Naive thymus-derived CD4-positive, alpha-beta T cell (primary cell): ENCODE measurements at regions of chr3 and their contacts with region 1.

Region 1: DNA sequence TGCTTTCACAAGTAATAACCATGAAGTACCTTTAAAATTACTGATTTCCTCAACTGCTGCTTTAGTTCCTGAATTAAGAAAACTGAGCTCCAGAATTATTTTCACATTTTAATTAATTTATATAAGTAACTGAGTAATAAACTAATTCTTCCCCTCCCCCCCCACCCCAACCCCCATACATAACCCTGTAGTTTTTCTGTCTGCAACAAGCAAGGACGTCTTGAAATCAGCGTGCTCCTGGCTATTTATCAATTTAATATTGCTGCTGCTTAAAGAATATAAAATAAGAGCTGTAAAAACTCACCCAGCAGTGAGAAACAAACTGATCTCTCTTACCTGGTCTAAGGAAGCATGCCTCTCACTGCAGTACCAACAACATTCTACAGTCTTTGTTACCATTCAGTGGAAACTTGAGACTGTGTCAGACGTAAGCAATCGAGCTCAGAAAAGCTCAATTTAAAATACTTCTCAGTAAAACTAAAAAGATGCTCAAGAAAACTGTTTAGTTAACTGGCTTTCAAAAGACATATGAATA is 121.0 kb downstream of the TFDP2 start:
- DNase-seq: peak in 7 of 9 donors; percentile 45 to 72 (median 63)
- ATAC-seq: peak; percentile 90
- H3K4me3 ChIP-seq: peak overlapping the region; percentile 47
- H3K4me3 Mint-ChIP-seq: peak overlapping the region; percentile 81 to 97 (median 90)
- H3K27ac ChIP-seq: peak overlapping the region; percentile 57
- H3K27ac Mint-ChIP-seq: peak overlapping the region; percentile 49 to 92 (median 82)
- H3K4me1 ChIP-seq: no peaks in the 10 kb centered on the region
- H3K4me1 Mint-ChIP-seq: peaks cover 13 to 50% (median 49%) of the 10 kb centered on the region in 7 donors
- H3K27me3 ChIP-seq: no peaks in the 10 kb centered on the region
- H3K27me3 Mint-ChIP-seq: no peaks in the 10 kb centered on the region

Region 2: GRCh38 chr3:141782454-141782853 is 245.9 kb before region 1 on chr3:
- CTCF ChIA-PET with region 1: no interaction called
- POLR2A ChIA-PET with region 1: no interaction called
- intact Hi-C with region 1: no loop called
- DNase-seq: no peak
- ATAC-seq: no peak
- H3K4me3 ChIP-seq: no peak overlapping the region
- H3K4me3 Mint-ChIP-seq: no peak overlapping the region
- H3K27ac ChIP-seq: no peak overlapping the region
- H3K27ac Mint-ChIP-seq: no peak overlapping the region
- H3K4me1 ChIP-seq: no peaks in the 10 kb centered on the region
- H3K4me1 Mint-ChIP-seq: peaks cover 0 to 9% (median 0%) of the 10 kb centered on the region in 7 donors
- H3K27me3 ChIP-seq: no peaks in the 10 kb centered on the region
- H3K27me3 Mint-ChIP-seq: peaks cover 0 to 7% (median 0%) of the 10 kb centered on the region in 5 donors

Region 3: GRCh38 chr3:142077849-142078500 is 49.7 kb after region 1 on chr3:
- CTCF ChIA-PET with region 1: no interaction called
- POLR2A ChIA-PET with region 1: no interaction called
- intact Hi-C with region 1: no loop called
- DNase-seq: no peak
- ATAC-seq: no peak
- H3K4me3 ChIP-seq: no peak overlapping the region
- H3K4me3 Mint-ChIP-seq: no peak overlapping the region
- H3K27ac ChIP-seq: no peak overlapping the region
- H3K27ac Mint-ChIP-seq: peak overlapping the region in 1 of 9 donors; percentile 7
- H3K4me1 ChIP-seq: no peaks in the 10 kb centered on the region
- H3K4me1 Mint-ChIP-seq: peaks cover 0 to 6% (median 4%) of the 10 kb centered on the region in 7 donors
- H3K27me3 ChIP-seq: no peaks in the 10 kb centered on the region
- H3K27me3 Mint-ChIP-seq: peaks cover 0 to 5% (median 0%) of the 10 kb centered on the region in 5 donors

Region 4: GRCh38 chr3:142148792-142149672 is 120.7 kb after region 1 on chr3 and contains the start of gene TFDP2:
- CTCF ChIA-PET with region 1: no interaction called
- POLR2A ChIA-PET with region 1: no interaction called
- intact Hi-C with region 1: loop called in 1 of 2 experiments (anchors 1 kb)
- DNase-seq: peak; percentile 77 to 88 (median 86)
- ATAC-seq: peak; percentile 99
- H3K4me3 ChIP-seq: peak within 1 kb of the TSS; percentile 81
- H3K4me3 Mint-ChIP-seq: peak within 1 kb of the TSS; percentile 85 to 96 (median 92)
- H3K27ac ChIP-seq: peak within 1 kb of the TSS; percentile 78
- H3K27ac Mint-ChIP-seq: peak within 1 kb of the TSS; percentile 57 to 95 (median 87)
- H3K4me1 ChIP-seq: peaks cover 0 to 13% of the 10 kb centered on the region in 2 donors
- H3K4me1 Mint-ChIP-seq: peaks cover 24 to 41% (median 32%) of the 10 kb centered on the region in 7 donors
- H3K27me3 ChIP-seq: no peaks in the 10 kb centered on the region
- H3K27me3 Mint-ChIP-seq: peaks cover 0 to 16% (median 0%) of the 10 kb centered on the region in 5 donors
- total RNA-seq, gene TFDP2: 23.7 to 44.7 (median 41.0) TPM